GM10248 (cell line): ENCODE measurements at regions of chr4 and their contacts with region 1.

Region 1: GRCh38 chr4:4334798-4335520 is 44.9 kb downstream of the ZBTB49 start:
- DNase-seq: peak; percentile 70
- CTCF ChIP-seq: peak; percentile 87

Region 2: GRCh38 chr4:4260253-4260652 is 74.7 kb before region 1 on chr4:
- CTCF ChIA-PET with region 1: interaction called, 12 read pairs
- POLR2A ChIA-PET with region 1: no interaction called
- DNase-seq: peak; percentile 50
- CTCF ChIP-seq: peak; percentile 16

Region 3: GRCh38 chr4:4323705-4324534 is 11.0 kb before region 1 on chr4:
- CTCF ChIA-PET with region 1: interaction called, 19 read pairs
- POLR2A ChIA-PET with region 1: no interaction called
- DNase-seq: no peak
- CTCF ChIP-seq: no peak

Region 4: GRCh38 chr4:4470208-4470607 is 135.2 kb after region 1 on chr4:
- CTCF ChIA-PET with region 1: no interaction called
- POLR2A ChIA-PET with region 1: no interaction called
- DNase-seq: no peak
- CTCF ChIP-seq: no peak